Aorta (tissue), 5 donors: ENCODE measurements at regions of chr1 and their contacts with region 1.

Region 1: DNA sequence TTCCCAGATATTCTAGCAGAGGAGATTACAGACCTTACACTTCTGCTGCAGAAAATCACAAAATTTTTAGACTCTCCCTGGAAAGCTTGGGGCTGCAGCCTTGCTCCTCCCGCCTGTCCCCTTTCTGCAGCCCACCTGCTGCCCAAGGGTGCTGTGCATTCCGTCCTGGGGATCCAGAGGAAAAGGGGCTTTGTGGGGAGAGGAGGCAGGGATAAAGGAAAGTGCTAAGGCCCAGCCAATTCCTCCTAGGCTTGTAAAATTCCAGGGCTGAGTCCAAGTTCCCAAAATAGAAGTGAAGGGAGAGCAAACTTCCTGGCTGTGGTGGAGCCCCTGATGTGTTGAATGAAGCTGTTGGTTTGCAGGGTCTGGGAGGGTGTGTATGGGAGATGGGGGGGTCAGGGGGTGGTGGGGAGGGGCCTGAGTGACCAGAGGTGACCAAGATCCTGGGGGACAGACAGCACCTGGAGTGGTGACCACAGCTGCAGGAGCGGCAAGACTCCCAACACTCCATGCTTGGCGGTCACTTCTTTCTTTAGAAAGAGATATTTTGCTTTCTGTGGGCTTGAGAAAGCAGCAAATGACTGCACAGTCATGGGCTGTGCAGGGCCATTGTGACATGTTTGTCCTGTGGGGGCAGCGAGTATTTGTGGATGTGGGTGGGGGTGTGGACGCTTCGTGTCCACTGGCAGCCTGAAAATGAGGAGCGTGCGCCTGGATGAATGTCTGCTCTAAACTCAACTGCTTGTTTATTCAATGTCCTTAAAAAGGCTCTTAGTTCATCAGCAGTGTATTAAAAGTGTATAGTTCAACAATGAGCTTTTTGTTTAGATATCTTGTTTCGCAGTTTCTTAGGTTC is 68.4 kb downstream of the TLR5 start:
- DNase-seq: no peak
- ATAC-seq: peak; percentile 55
- H3K4me3 ChIP-seq: no peak overlapping the region
- H3K27ac ChIP-seq: peak overlapping the region in 1 of 2 donors; percentile 82
- H3K4me1 ChIP-seq: no peaks in the 10 kb centered on the region
- H3K27me3 ChIP-seq: no peaks in the 10 kb centered on the region

Region 2: DNA sequence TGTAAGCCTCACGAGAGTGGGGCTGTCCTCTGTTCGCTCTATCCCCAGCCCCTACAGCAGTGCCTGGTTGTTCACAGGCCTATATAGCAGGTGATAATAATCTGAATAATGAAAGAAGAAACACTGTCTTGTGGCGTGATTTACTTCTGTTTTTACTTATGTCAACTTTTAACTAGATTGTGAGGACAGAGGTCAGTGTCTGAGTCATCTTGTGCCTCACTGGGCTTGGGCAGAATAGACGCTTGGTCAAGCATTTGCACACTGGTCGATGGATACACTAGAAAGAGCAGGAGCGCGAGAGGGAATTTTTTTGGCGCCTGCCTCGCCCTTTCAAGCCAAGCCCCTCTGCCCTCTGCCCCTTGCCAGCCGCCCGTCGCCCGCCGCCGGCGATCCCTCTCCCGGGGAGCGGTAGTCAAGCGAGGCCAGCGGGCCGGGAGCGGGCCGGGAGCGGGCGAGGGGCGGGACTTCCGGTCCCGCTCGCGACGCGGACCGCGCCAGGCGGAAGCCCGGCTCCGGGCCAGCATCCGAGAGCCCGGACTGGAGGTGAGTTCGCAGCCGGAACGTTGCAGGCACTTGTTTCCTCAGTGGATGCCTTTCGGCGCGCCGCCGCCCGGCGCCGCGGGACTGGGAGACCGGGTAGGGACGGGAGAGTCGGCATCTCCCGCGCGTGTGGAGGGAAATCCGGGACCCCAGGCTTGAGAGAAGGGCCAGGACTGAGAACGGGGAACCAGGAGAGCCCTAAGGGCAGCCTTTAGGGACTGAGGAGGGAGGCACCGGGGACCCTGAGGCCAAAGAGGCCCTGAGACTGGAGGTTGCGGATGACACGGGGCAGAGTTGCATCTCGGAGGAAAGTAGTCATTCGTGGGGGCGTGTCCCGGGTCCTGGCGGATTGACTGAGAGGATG is 259.9 kb before region 1 on chr1 and contains the start of gene DISP1:
- intact Hi-C with region 1: loop called in 1 of 2 experiments (anchors 5 kb)
- DNase-seq: peak; percentile 87 to 94
- ATAC-seq: peak; percentile 96
- H3K4me3 ChIP-seq: peak within 1 kb of the TSS; percentile 83 to 85
- H3K27ac ChIP-seq: peak within 1 kb of the TSS; percentile 71 to 95
- H3K4me1 ChIP-seq: peaks cover 0 to 12% of the 10 kb centered on the region in 2 donors
- H3K27me3 ChIP-seq: no peaks in the 10 kb centered on the region
- total RNA-seq, gene DISP1: 8.4 to 11.4 TPM

Region 3: GRCh38 chr1:223035724-223036478 is 38.8 kb before region 1 on chr1:
- intact Hi-C with region 1: loop called in 1 of 2 experiments (anchors 5 kb)
- DNase-seq: no peak
- ATAC-seq: no peak
- H3K4me3 ChIP-seq: no peak overlapping the region
- H3K27ac ChIP-seq: no peak overlapping the region
- H3K4me1 ChIP-seq: no peaks in the 10 kb centered on the region
- H3K27me3 ChIP-seq: no peaks in the 10 kb centered on the region

Region 4: GRCh38 chr1:223129229-223129901 is 54.7 kb after region 1 on chr1:
- intact Hi-C with region 1: no loop called
- DNase-seq: peak; percentile 84 to 95
- ATAC-seq: peak; percentile 85
- H3K4me3 ChIP-seq: no peak overlapping the region
- H3K27ac ChIP-seq: no peak overlapping the region
- H3K4me1 ChIP-seq: no peaks in the 10 kb centered on the region
- H3K27me3 ChIP-seq: no peaks in the 10 kb centered on the region

Region 5: GRCh38 chr1:223199094-223199647 is 124.5 kb after region 1 on chr1:
- intact Hi-C with region 1: no loop called
- DNase-seq: no peak
- ATAC-seq: no peak
- H3K4me3 ChIP-seq: no peak overlapping the region
- H3K27ac ChIP-seq: no peak overlapping the region
- H3K4me1 ChIP-seq: no peaks in the 10 kb centered on the region
- H3K27me3 ChIP-seq: peaks cover 0 to 2% of the 10 kb centered on the region in 2 donors